CD14-positive monocyte (primary cell): ENCODE measurements at regions of chr20 and their contacts with region 1.

Region 1: DNA sequence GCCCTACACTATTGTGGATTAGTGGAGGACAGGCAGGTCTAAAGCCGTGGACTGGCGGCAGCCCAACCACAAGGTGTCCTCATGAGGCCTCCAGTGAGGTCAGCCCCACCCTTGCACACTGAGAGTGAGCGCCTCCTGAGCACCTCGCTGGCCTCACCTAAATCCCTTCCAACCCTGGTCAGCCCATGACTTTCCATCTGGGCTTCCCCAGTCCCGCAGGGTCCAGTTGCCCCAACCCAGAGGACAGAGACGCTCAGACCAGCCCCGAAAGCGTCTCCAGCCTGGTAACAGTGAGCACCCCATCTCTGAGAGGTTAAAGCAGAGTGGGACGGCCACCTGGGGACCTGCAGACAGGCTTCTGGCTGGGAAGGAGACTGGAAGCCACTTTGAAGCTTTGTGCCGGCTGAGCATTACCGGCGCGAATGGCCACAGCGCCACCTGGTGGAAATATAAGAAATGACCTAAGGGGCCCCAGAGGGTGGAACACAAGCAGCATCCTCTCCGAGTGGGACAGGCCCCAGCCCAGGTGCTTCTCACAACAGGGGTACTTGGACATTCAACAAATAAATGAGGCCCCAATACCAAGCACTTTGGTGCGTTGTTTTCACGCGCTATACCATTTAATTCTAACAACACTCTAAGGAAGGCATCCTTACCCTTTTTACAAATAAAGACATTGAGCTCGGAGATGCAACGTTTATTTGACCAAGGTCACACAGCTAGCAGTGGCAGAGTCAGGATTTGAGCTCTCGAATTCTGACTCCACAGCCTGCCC is 65.7 kb upstream of the TOP1 start:
- DNase-seq: peak; percentile 59 to 66 (median 65)
- H3K4me3 ChIP-seq: no peak overlapping the region
- H3K4me3 Mint-ChIP-seq: no peak overlapping the region
- H3K27ac ChIP-seq: no peak overlapping the region
- H3K27ac Mint-ChIP-seq: peak overlapping the region in 1 of 7 donors; percentile 8
- H3K4me1 ChIP-seq: peaks cover 21% of the 10 kb centered on the region in 2 donors
- H3K4me1 Mint-ChIP-seq: peaks cover 24% of the 10 kb centered on the region
- H3K27me3 ChIP-seq: no peaks in the 10 kb centered on the region
- H3K27me3 Mint-ChIP-seq: peaks cover 0 to 6% (median 2%) of the 10 kb centered on the region in 3 donors
- CTCF ChIP-seq: peak; percentile 87

Region 2: DNA sequence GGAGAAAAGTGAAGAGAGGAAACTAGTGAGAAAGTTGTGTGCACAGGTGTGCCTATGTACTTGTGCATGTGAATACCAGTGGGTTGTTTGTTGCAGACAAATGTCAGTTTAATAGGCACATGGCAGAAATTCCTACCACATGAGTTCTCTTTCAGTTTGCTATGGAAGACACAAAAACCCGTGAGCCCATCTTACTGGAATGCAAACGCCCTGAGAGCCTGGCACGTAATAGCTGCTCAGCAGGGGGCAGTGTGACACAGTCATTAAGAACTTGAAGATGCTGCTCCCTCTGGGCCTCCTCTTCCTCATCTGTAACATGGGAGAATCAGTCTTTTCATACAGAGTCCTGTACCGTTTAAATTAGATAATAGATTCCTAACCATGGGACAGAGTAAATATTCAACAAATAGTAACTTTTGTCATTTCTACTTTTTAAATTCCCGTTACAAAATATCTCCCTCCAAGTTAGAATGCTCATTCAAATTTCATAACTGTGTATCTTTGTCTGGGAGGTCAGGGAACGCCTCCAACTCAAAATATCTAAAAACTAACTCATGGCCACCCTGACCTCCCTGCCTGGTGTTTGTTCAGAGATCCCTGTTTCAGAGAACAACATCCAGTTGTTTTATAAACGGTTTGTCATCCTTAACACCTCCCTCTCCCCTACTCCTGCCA is 1076.8 kb before region 1 on chr20:
- intact Hi-C with region 1: loop called in 1 of 2 experiments (anchors 5 kb)
- DNase-seq: peak; percentile 12 to 40 (median 34)
- H3K4me3 ChIP-seq: no peak overlapping the region
- H3K4me3 Mint-ChIP-seq: no peak overlapping the region
- H3K27ac ChIP-seq: no peak overlapping the region
- H3K27ac Mint-ChIP-seq: no peak overlapping the region
- H3K4me1 ChIP-seq: peaks cover 0 to 3% of the 10 kb centered on the region in 2 donors
- H3K4me1 Mint-ChIP-seq: peaks cover 6% of the 10 kb centered on the region
- H3K27me3 ChIP-seq: peaks cover 0 to 2% of the 10 kb centered on the region in 2 donors
- H3K27me3 Mint-ChIP-seq: peaks cover 0 to 3% (median 2%) of the 10 kb centered on the region in 3 donors
- CTCF ChIP-seq: peak; percentile 61

Region 3: GRCh38 chr20:40741507-40742106 is 221.3 kb before region 1 on chr20:
- intact Hi-C with region 1: loop called in 1 of 2 experiments (anchors 5 kb)
- DNase-seq: peak; percentile 48 to 63 (median 59)
- H3K4me3 ChIP-seq: no peak overlapping the region
- H3K4me3 Mint-ChIP-seq: no peak overlapping the region
- H3K27ac ChIP-seq: no peak overlapping the region
- H3K27ac Mint-ChIP-seq: no peak overlapping the region
- H3K4me1 ChIP-seq: peaks cover 38 to 46% of the 10 kb centered on the region in 2 donors
- H3K4me1 Mint-ChIP-seq: peaks cover 52% of the 10 kb centered on the region
- H3K27me3 ChIP-seq: no peaks in the 10 kb centered on the region
- H3K27me3 Mint-ChIP-seq: peaks cover 0 to 13% (median 0%) of the 10 kb centered on the region in 3 donors
- CTCF ChIP-seq: peak; percentile 82

Region 4: DNA sequence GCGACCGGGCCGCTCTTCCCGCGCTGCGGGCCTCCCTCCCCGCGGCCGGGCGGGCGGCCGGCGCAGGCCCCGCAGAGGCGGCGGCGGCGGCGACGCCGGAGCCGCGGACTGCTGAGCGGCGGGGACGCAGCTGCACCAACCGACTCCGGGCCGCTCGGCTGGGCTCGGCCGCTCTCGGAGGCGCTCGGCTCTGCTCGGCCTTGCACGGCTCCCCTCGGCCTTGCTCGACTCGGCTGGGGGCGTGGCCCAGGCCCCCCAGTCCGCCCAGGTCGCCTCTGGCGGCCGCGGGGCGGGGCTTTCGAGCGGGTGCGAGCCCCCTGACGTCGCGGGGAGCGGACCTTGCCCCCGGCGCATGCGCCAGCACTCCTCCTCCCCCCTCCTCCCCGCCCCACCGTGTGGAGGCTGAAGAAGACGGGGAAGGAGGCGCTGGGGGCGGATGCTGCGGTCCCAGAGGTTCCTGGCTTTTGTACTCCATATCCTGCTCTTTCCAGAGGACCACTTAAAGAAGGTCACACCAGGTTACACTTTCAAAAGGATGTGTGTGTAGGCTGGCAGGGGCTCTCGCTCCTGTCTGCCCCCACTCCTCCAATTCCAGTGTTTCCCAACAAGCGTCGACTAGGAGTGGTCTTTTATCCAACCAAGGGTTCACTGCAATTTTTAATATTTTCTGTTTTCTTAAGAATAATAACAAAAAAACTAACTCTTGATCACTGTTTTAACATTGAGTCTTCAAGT is 354.8 kb after region 1 on chr20 and contains the start of gene ZHX3:
- intact Hi-C with region 1: loop called in 1 of 2 experiments (anchors 10 kb)
- DNase-seq: peak; percentile 86 to 91 (median 87)
- H3K4me3 ChIP-seq: peak within 1 kb of the TSS; percentile 60 to 86 (median 81)
- H3K4me3 Mint-ChIP-seq: peak within 1 kb of the TSS; percentile 86 to 90
- H3K27ac ChIP-seq: peak within 1 kb of the TSS in 1 of 2 donors; percentile 59
- H3K27ac Mint-ChIP-seq: peak within 1 kb of the TSS in 5 of 7 donors; percentile 61 to 88 (median 76)
- H3K4me1 ChIP-seq: peaks cover 11 to 26% of the 10 kb centered on the region in 2 donors
- H3K4me1 Mint-ChIP-seq: peaks cover 27% of the 10 kb centered on the region
- H3K27me3 ChIP-seq: peaks cover 0 to 2% of the 10 kb centered on the region in 2 donors
- H3K27me3 Mint-ChIP-seq: peaks cover 3 to 17% (median 17%) of the 10 kb centered on the region in 3 donors
- CTCF ChIP-seq: no peak
- polyA plus RNA-seq, gene ZHX3: 0.58 to 3.2 (median 1.1) TPM